ENCODE measurements at regions of chr4 and their contacts with region 1.

Region 1: GRCh38 chr4:55553441-55554201 is 6.9 kb upstream of the CLOCK start:
- DNase-seq: peak in 1 of 2 experiments; percentile 11
- H3K4me3 ChIP-seq: no peak overlapping the region
- H3K27ac ChIP-seq: no peak overlapping the region
- H3K4me1 ChIP-seq: peaks cover 12% of the 10 kb centered on the region
- H3K27me3 ChIP-seq: no peaks in the 10 kb centered on the region
- CTCF ChIP-seq: no peak

Region 2: DNA sequence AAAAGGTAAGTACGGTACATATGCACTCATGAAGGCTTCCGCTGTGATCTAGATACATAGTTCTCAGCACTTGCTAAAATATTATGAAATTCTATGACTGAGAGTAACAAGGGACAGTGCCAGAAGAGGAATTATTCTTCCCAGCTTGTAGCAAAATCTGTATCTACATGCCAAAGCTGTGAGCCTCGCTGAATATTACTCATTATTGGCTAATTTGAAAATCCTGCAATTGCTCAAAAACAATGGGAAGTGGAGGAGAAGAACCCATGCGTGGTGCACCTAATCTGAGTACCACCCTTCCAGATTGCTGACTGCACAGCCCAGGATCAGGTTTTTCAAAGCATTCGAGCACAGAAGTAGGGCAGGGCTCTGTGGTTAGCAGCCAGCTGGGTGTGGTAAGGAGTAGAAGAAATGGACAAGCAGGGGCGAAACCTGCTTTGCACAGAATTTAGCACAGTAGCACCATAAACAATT is 55.8 kb after region 1 on chr4:
- CTCF ChIA-PET with region 1: no interaction called
- POLR2A ChIA-PET with region 1: no interaction called
- intact Hi-C with region 1: loop called (anchors 2 kb)
- DNase-seq: peak; percentile 59 to 80
- H3K4me3 ChIP-seq: no peak overlapping the region
- H3K27ac ChIP-seq: peak overlapping the region; percentile 43
- H3K4me1 ChIP-seq: peaks cover 14% of the 10 kb centered on the region
- H3K27me3 ChIP-seq: no peaks in the 10 kb centered on the region
- CTCF ChIP-seq: no peak

Measured in PC-9 (cell line).